ENCODE measurements at regions of chr20 and their contacts with region 1.

Region 1: DNA sequence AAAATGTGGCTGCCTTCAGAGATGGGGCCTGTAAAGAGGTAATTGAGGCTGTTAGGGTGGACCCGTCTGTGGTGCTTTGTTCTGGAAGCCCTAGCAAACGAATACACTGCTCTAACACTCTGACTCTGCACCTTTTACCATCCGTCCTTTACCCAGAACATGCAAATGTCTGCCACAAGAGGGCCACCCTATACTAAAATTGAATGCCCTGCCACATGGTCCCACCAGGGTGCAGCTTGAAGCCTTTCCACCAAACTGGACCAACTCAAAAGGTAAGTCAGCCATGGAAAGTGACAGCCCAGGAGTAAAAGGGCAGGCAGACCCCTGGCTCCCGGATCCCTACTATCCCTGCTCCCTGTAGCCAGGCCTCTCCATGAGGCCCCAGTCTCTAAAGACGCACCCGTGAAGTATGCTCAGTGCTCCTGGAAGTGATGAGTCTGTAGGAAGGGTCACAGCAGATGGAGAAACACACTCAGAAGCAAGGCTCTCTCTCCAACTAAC is 5.8 kb upstream of the BFSP1 start:
- DNase-seq: peak; percentile 65 to 82 (median 74)
- H3K4me3 ChIP-seq: no peak overlapping the region
- H3K27ac ChIP-seq: no peak overlapping the region
- H3K4me1 ChIP-seq: no peaks in the 10 kb centered on the region
- H3K27me3 ChIP-seq: no peaks in the 10 kb centered on the region
- CTCF ChIP-seq: peak; percentile 90 to 99 (median 97)
- EP300 ChIP-seq: no peak
- POLR2A ChIP-seq: peak; percentile 14

Region 2: DNA sequence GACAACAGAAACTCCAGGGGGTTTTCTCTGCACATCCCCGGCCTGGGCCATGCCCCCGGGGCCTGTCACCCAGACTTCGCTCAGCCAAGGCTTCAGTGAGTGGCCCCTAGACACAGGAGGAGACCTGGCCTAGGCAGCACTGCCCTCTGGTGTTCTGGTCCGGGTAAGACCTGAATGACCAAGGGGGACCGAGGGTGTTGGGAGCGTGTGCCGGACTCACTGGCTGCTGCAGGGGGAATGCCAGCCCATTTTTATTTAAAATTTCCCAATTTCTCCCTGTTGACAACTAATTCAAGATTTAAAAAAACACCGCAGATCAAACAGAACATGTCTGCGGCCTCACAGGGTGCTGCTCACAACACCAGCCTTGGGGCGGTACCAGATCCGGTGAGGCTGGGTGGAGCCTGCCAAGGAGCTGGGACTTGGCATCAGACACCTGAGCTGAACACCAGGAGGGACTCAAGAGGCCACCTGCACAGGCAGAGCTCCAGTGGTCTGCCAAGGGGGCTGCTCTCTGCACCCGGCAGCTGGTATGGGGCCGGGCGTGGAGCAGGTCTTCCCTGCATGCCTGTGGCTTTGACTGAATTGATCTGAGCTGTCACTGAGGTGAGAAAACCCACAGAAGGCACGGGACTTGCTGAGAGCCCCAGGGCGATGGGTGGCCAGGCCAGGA is 80.7 kb after region 1 on chr20:
- intact Hi-C with region 1: loop called (anchors 2 to 5 kb)
- DNase-seq: peak; percentile 51 to 79 (median 76)
- H3K4me3 ChIP-seq: no peak overlapping the region
- H3K27ac ChIP-seq: no peak overlapping the region
- H3K4me1 ChIP-seq: peaks cover 6% of the 10 kb centered on the region
- H3K27me3 ChIP-seq: no peaks in the 10 kb centered on the region
- CTCF ChIP-seq: peak in 2 of 3 donors; percentile 75 to 90
- EP300 ChIP-seq: no peak
- POLR2A ChIP-seq: no peak

Region 3: DNA sequence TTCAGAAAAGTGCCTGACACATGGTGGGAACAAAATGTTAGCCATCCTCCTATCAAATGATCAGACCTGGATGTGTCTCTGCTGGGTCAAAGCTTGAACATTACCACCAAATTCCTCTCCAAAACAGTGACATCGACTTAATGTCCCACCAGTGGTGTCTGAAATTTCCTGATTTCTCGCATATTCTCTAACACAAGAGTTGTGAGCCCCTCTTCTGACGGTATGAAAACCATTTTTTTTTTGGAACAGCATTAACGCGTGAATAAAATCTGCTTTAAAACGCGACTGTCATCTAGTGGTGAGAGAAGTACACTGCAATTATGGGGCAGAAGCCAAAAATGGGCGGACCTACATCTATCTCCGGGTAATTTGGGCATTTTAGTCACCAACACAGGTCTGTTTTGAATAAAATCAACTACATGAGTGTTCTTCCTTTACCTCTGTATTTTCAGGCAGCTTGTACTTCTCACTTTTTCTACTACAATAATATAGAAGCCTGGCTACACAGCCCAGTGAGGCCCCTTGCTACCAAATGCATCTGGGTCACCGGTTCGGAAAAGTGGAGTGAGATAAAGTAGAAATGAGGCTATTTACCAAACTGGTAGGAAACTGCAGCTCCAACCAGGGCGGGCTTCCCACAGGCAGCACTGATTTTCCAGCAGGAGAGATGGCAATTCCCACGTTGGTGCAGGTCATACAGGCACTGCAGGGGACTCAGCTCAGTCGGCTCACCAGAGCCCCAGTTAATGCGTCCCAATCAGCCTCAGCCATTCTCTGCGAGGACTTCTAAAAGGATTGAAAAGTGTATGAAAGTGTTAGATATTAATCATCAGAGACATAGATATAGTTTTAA is 459.2 kb after region 1 on chr20:
- intact Hi-C with region 1: loop called in 1 of 4 experiments (anchors 10 kb)
- DNase-seq: peak in 4 of 5 donors; percentile 28 to 40 (median 34)
- H3K4me3 ChIP-seq: no peak overlapping the region
- H3K27ac ChIP-seq: no peak overlapping the region
- H3K4me1 ChIP-seq: no peaks in the 10 kb centered on the region
- H3K27me3 ChIP-seq: no peaks in the 10 kb centered on the region
- CTCF ChIP-seq: peak; percentile 89 to 97 (median 90)
- EP300 ChIP-seq: no peak
- POLR2A ChIP-seq: no peak

Measured in ovary (tissue), 10 donors.